Left ventricle myocardium superior (tissue), 1 donor: ENCODE measurements at regions of chr18 and their contacts with region 1.

Region 1: DNA sequence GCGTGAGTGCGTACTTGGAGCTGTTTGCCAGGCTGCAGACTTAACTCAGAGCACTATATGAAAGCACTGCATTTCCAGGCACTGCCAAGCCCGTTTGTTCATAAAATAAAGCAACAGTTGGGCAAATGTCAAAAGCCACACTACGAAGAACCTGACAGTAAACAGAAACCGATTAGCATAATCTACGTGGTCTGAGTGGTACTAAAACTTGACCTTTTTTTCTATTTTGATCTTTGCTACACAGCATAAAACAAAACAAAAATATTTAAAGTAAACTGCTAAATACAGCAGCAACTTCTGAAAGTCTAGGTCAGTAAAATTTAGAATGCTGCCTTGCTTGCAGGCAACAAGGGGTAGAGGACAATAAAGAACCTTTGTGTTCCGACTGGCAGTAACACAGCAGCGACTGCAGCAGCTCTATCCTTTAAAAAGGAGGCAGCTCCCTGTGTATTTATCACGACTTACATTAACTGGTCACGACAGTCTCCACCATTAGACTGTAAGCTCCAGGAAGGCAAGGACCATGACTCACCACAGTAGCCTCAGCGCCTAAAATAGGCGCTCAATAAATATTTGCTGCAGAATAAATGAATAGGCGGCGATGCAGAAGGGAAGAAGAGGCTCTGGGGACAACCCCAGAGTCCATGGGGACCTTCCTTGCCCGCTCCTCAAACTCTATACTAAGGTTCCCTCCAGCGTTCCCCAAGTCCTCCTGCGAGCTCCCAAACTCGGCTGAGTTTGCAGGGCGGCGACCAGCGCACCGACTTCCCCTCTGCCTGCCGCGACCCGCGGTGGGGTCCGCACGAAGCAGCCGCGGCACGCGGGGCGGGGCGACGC is 902 bp downstream of the SS18 start:
- DNase-seq: no peak
- ATAC-seq: no peak

Region 2: GRCh38 chr18:26022585-26022984 is 66.9 kb before region 1 on chr18:
- intact Hi-C with region 1: loop called (anchors 10 kb)
- DNase-seq: no peak
- ATAC-seq: no peak